Activated CD8-positive, alpha-beta T cell treated with anti-CD3 and anti-CD28 coated beads, Interleukin-2, amount 10 ng/mL, durations not matched to agents 7 days and 5 days (primary cell): ENCODE measurements at regions of chr12 and their contacts with region 1.

Region 1: GRCh38 chr12:15899282-15899870 is 11.8 kb upstream of the DERA start:
- DNase-seq: no peak
- ATAC-seq: peak; percentile 57
- H3K4me3 Mint-ChIP-seq: no peak overlapping the region
- H3K27ac Mint-ChIP-seq: no peak overlapping the region
- H3K4me1 Mint-ChIP-seq: peaks cover 12% of the 10 kb centered on the region
- H3K27me3 Mint-ChIP-seq: no peaks in the 10 kb centered on the region

Region 2: GRCh38 chr12:15882118-15882971 is 17.0 kb before region 1 on chr12 and contains the start of gene STRAP:
- CTCF ChIA-PET with region 1: interaction called, 32 read pairs
- POLR2A ChIA-PET with region 1: interaction called, 6 read pairs
- DNase-seq: peak; percentile 96
- ATAC-seq: peak; percentile 96
- H3K4me3 Mint-ChIP-seq: peak within 1 kb of the TSS; percentile 93
- H3K27ac Mint-ChIP-seq: peak within 1 kb of the TSS; percentile 100
- H3K4me1 Mint-ChIP-seq: peaks cover 44% of the 10 kb centered on the region
- H3K27me3 Mint-ChIP-seq: no peaks in the 10 kb centered on the region
- total RNA-seq, gene STRAP: 87.5 to 90.8 TPM

Region 3: GRCh38 chr12:15910864-15911721 is 11.7 kb after region 1 on chr12 and contains the start of gene DERA:
- CTCF ChIA-PET with region 1: interaction called, 40 read pairs
- POLR2A ChIA-PET with region 1: interaction called, 7 read pairs
- DNase-seq: peak; percentile 57
- ATAC-seq: peak; percentile 95
- H3K4me3 Mint-ChIP-seq: peak within 1 kb of the TSS; percentile 92
- H3K27ac Mint-ChIP-seq: peak within 1 kb of the TSS; percentile 91
- H3K4me1 Mint-ChIP-seq: peaks cover 23% of the 10 kb centered on the region
- H3K27me3 Mint-ChIP-seq: no peaks in the 10 kb centered on the region
- total RNA-seq, gene DERA: 23.1 to 27.7 TPM

Region 4: DNA sequence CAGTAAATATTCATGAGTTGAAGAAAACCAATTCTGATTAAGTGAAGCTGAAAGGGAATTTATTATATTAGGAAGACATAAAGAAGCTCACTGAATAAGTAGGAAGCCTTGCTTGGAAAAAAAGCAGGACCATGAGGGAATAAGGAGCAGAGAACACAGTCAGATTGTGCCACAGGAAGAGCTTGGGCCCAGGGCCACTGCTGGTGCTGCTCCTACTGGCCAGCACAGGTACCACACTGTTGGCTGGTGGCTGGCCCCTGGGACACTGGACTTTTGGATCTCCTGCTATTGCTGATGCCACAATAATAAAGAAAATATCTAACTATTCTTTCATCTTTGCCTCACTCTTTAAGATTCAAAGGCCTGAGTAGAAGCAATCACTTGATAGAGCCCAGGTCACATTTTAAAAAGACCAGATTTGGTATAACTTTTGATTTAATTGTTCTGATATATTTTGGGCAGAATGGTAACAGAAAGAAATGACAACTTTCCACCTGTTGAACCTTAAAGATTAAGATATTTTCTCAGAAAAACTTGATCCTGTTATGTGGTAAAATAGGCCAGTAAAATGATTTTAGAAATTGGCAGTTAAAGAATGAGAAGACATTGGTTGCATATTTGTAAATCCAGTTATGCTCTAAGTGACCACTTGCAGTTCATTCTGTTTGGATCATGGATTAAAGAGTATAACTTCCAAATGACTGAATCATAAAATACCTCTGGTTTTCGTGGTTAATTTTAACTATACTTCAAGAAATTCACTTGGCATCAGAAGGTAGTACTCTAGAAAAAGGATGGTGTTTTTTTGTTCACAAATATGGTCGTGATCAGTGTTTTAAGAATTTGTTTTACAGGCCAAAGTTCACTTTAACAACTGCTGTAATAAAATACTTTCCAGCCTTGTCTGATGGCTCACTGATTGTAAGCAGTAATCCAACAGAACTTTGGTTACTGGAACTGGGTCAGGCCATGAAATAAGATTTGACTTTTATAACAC is 80.0 kb after region 1 on chr12:
- CTCF ChIA-PET with region 1: no interaction called
- POLR2A ChIA-PET with region 1: no interaction called
- DNase-seq: no peak
- ATAC-seq: no peak
- H3K4me3 Mint-ChIP-seq: no peak overlapping the region
- H3K27ac Mint-ChIP-seq: no peak overlapping the region
- H3K4me1 Mint-ChIP-seq: no peaks in the 10 kb centered on the region
- H3K27me3 Mint-ChIP-seq: no peaks in the 10 kb centered on the region